Heart right ventricle (tissue), 16 donors: ENCODE measurements at regions of chr11 and their contacts with region 1.

Region 1: GRCh38 chr11:3959015-3959919 is 103.8 kb downstream of the STIM1 start:
- DNase-seq: no peak
- ATAC-seq: peak in 1 of 8 donors; percentile 65
- H3K4me3 ChIP-seq: no peak overlapping the region
- H3K27ac ChIP-seq: no peak overlapping the region
- H3K4me1 ChIP-seq: peaks cover 0 to 39% (median 7%) of the 10 kb centered on the region in 9 donors
- H3K27me3 ChIP-seq: no peaks in the 10 kb centered on the region
- CTCF ChIP-seq: peak in 1 of 9 donors; percentile 27

Region 2: GRCh38 chr11:3786781-3787428 is 172.4 kb before region 1 on chr11:
- intact Hi-C with region 1: no loop called
- DNase-seq: no peak
- ATAC-seq: peak in 2 of 8 donors; percentile 25 to 34
- H3K4me3 ChIP-seq: no peak overlapping the region
- H3K27ac ChIP-seq: peak overlapping the region in 3 of 10 donors; percentile 5 to 82 (median 8)
- H3K4me1 ChIP-seq: peaks cover 0 to 86% (median 35%) of the 10 kb centered on the region in 9 donors
- H3K27me3 ChIP-seq: no peaks in the 10 kb centered on the region
- CTCF ChIP-seq: no peak

Region 3: GRCh38 chr11:3994030-3994640 is 34.9 kb after region 1 on chr11:
- intact Hi-C with region 1: loop called in 1 of 10 experiments (anchors 5 kb)
- DNase-seq: no peak
- ATAC-seq: no peak
- H3K4me3 ChIP-seq: no peak overlapping the region
- H3K27ac ChIP-seq: no peak overlapping the region
- H3K4me1 ChIP-seq: peaks cover 0 to 22% (median 17%) of the 10 kb centered on the region in 9 donors
- H3K27me3 ChIP-seq: no peaks in the 10 kb centered on the region
- CTCF ChIP-seq: no peak

Region 4: GRCh38 chr11:4025248-4025966 is 66.1 kb after region 1 on chr11:
- intact Hi-C with region 1: loop called in 1 of 10 experiments (anchors 10 kb)
- DNase-seq: peak in 1 of 2 donors; percentile 11
- ATAC-seq: peak; percentile 55 to 80 (median 70)
- H3K4me3 ChIP-seq: no peak overlapping the region
- H3K27ac ChIP-seq: peak overlapping the region; percentile 8 to 79 (median 58)
- H3K4me1 ChIP-seq: peaks cover 9 to 41% (median 30%) of the 10 kb centered on the region in 9 donors
- H3K27me3 ChIP-seq: no peaks in the 10 kb centered on the region
- CTCF ChIP-seq: no peak